Activated CD4-positive, alpha-beta memory T cell treated with anti-CD3 and anti-CD28 coated beads for 36 hours (primary cell): ENCODE measurements at regions of chr16 and their contacts with region 1.

Region 1: DNA sequence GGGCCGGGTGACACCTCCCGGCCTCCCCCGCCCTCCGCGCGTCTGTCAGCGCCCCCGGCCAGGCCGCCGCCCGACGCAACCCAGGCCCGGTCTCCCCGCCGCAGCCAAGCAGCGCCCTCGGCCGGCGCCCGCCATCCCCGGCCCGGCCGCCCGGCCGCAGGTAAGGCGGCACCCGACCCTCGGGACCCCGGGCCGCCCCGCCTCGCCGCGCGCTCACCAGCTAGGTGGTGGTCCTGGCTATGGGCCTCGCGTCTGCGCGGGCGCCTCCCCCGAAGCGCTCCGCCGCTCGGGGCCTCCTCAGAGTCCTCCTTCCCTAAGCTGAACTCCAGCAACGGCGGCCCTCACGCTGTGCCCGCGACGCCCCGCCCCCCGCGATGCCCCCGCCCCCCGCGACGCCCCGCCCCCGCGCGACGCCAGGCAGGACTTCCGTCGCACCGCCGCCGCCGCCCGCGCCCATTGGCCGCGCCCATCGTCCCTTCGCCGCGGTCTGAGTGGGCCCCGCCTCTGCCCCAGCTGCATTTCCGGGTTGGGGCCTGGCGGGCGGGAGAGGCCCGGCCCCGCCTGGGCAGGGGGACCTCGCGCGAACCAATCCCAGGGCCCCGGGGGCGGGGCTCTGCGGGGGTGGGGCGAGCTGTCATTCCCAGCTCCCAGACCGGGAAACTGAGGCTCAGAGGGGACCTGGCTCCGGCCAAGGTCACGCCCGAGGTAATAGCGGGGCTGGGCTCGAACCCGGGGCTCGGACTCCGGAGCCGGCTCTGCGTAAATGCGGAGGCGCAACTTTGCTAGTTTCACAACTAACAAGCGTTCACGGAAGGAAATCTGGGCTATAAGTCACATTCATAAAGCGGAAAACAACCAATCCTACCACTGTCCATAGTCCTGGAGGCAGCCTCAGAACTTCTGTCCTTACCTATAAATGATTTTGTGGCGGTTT is 9.0 kb upstream of the KCTD5 start:
- DNase-seq: peak; percentile 97
- H3K4me3 Mint-ChIP-seq: peak overlapping the region; percentile 77
- H3K27ac Mint-ChIP-seq: peak overlapping the region; percentile 67
- H3K4me1 Mint-ChIP-seq: peaks cover 40% of the 10 kb centered on the region
- H3K27me3 Mint-ChIP-seq: no peaks in the 10 kb centered on the region

Region 2: DNA sequence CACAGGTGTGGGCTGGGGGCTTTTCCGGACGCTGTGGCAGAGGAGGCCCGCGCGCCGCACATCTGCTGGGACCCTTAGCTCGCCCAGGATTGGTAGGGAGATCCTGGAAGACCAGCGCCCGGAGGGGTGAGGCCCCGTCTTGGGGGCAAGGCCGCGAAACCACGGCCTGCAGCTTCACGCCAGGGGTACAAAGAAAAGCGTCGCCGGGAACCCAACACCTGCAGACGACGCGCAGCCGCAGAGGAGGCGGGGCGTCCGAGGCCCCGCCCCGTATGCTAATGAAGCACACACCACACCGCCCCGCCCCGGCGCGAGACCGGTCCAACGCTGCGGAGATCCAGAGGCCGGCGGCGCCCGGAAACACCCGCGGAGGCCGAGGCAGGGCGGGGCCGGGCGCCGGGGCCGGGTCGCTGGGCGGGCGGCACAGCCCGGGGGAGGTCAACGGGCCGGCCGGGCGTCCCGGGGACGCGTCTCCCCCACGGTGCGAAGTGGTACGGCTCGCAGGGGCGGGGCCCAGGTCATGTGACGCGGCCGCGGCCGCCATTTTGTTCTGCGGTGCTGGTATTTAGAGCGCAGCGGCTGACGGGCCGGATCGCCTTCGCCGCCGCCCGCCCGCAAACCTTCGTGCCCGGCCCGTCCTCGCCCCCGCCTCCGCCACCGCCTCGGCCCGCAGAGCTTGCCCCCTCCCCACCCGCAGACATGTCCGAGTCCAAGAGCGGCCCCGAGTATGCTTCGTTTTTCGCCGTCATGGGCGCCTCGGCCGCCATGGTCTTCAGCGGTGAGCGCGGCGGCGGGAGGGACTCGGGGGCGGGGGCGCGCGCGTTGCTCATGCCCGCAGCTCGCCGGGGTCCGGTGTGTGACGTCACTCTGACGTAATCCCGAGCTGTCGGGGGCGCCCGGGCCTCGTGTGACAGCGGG is 159.7 kb before region 1 on chr16 and contains the start of gene ATP6V0C:
- CTCF ChIA-PET with region 1: no interaction called
- POLR2A ChIA-PET with region 1: no interaction called
- intact Hi-C with region 1: loop called (anchors 5 kb)
- DNase-seq: peak; percentile 91
- H3K4me3 Mint-ChIP-seq: peak within 1 kb of the TSS; percentile 92
- H3K27ac Mint-ChIP-seq: peak within 1 kb of the TSS; percentile 91
- H3K4me1 Mint-ChIP-seq: peaks cover 40% of the 10 kb centered on the region
- H3K27me3 Mint-ChIP-seq: no peaks in the 10 kb centered on the region
- total RNA-seq, gene ATP6V0C: 111 to 115 TPM